ENCODE measurements at regions of chr4 and their contacts with region 1.

Region 1: GRCh38 chr4:90419124-90419711 is 292.0 kb downstream of the CCSER1 start:
- DNase-seq: no peak
- H3K4me3 ChIP-seq: no peak overlapping the region
- CTCF ChIP-seq: peak; percentile 36

Region 2: GRCh38 chr4:90445380-90445779 is 26.2 kb after region 1 on chr4:
- CTCF ChIA-PET with region 1: no interaction called
- POLR2A ChIA-PET with region 1: no interaction called
- DNase-seq: no peak
- H3K4me3 ChIP-seq: no peak overlapping the region
- CTCF ChIP-seq: no peak

Region 3: GRCh38 chr4:90580326-90580725 is 161.1 kb after region 1 on chr4:
- CTCF ChIA-PET with region 1: no interaction called
- POLR2A ChIA-PET with region 1: no interaction called
- DNase-seq: no peak
- H3K4me3 ChIP-seq: no peak overlapping the region
- CTCF ChIP-seq: no peak

Region 4: GRCh38 chr4:92387459-92388069 is 1968.3 kb after region 1 on chr4:
- CTCF ChIA-PET with region 1: interaction called, 12 read pairs
- POLR2A ChIA-PET with region 1: no interaction called
- DNase-seq: no peak
- H3K4me3 ChIP-seq: no peak overlapping the region
- CTCF ChIP-seq: peak; percentile 33